ENCODE measurements at regions of chr12 and their contacts with region 1.

Region 1: DNA sequence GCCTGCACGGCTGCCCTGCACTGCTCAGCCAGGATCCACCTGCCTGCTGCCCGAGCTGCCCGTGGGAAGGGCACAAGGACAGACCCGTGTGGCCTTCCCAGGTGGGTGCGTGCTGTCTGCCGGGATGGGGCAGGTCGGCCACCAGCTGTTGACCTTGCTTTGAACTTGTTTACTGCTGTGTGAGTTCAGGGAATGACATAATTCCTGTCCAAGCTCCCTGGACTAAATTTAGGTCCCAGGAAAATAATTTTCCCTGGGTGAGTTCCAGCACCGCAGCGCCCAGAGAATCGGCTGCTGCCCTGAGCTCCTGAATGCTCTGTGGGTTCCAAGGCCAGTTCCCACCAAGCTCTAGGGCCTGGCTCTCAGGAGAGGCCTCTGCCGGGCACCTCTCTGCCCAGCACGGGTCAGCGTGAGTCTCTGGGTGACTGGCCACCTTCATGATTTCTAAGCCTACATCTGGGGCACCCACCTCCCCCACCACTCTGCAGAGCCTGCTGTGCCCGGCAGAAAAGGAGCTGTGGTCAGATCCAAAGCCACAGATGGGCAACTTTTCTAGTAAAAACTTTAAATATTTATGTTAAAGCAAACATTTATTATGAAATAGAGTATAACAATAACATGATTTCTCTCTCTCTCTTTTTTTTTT is 27.2 kb upstream of the MLXIP start:
- DNase-seq: no peak
- H3K4me3 ChIP-seq: no peak overlapping the region
- H3K27ac ChIP-seq: no peak overlapping the region
- H3K4me1 ChIP-seq: no peaks in the 10 kb centered on the region
- H3K27me3 ChIP-seq: no peaks in the 10 kb centered on the region

Region 2: DNA sequence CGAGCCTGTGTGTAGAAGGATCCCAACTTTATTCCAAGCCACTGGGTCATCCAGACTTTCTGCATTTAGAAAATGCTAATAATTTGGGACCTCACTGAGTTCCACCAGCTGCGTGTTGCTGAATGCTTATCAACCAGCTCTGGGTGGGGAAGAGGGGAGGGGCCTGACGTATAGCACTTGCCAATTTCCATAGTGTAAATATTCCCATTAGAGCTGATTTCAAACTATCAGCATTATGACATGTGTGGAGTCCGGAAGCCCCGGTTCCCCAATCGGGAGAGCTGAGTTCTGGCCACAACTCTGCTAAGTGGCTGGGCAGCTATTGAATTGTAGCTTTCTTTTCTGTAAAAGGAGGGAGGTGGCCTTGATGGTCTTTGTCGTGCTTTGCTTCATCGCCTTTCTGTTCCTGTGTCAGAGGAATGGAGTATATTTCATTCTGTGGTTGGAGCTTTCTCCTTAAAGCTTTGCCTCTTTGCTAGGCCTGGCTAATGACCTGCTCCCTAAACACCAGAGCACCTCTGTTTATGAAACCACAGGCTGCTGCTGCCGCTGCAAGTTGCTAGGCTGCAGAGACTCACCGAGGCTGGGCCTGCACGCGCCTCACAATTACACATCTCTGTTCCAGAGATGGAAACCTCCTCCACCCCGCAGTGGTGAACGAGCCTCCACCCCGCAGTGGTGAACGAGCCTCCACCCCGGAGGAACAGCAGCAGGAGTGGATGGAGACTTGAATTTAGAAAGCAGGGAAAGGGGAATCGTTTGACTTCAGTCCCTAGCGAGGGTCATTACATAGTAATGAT is 37.4 kb before region 1 on chr12:
- CTCF ChIA-PET with region 1: no interaction called
- POLR2A ChIA-PET with region 1: no interaction called
- DNase-seq: no peak
- H3K4me3 ChIP-seq: no peak overlapping the region
- H3K27ac ChIP-seq: no peak overlapping the region
- H3K4me1 ChIP-seq: no peaks in the 10 kb centered on the region
- H3K27me3 ChIP-seq: no peaks in the 10 kb centered on the region

Region 3: DNA sequence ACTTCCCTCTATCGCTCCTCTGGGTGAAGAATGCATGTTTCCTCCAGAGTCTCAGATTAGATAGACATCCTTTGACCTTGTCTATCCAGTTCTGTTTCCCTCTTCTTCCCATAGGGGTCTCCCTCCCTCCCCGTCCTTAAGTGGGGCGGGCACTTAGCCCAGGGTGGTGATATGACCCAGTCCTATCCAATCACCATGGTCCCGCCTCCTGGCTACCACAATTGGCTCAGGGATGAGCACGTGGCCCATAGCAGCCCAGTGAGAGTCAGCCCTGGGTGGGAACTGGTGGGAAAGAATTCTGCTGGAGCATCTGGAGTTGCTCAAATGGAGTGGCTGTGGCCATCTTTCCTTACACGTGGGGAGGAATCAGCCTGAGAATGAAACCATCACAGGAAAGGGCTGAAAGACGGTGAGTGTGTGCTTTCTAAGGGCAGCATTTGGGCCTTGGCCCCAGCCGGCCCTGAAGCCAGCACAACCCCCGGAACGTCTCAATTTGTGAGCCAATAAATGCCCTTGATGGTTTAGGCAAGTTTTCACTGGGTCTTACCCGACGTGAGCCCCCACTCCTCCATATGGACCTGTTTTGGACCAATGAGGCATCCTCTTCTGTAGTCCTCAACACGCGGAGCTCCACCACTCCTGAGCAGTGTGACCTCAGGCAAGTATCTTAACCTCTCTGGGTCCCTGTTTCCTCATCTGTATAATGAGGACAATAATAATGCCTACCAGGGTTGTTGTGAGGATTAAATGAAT is 12.8 kb after region 1 on chr12:
- CTCF ChIA-PET with region 1: interaction called, 16 read pairs
- POLR2A ChIA-PET with region 1: interaction called, 3 read pairs
- DNase-seq: peak; percentile 88 to 90 (median 88)
- H3K4me3 ChIP-seq: peak overlapping the region in 2 of 7 experiments; percentile 14 to 33
- H3K27ac ChIP-seq: peak overlapping the region in 1 of 2 experiments; percentile 70
- H3K4me1 ChIP-seq: peaks cover 6 to 37% (median 32%) of the 10 kb centered on the region in 4 experiments
- H3K27me3 ChIP-seq: no peaks in the 10 kb centered on the region

Region 4: GRCh38 chr12:122107261-122107660 is 55.9 kb after region 1 on chr12:
- CTCF ChIA-PET with region 1: interaction called, 19 read pairs
- POLR2A ChIA-PET with region 1: no interaction called
- DNase-seq: no peak
- H3K4me3 ChIP-seq: no peak overlapping the region
- H3K27ac ChIP-seq: no peak overlapping the region
- H3K4me1 ChIP-seq: peaks cover 3 to 52% (median 28%) of the 10 kb centered on the region in 4 experiments
- H3K27me3 ChIP-seq: no peaks in the 10 kb centered on the region

Region 5: DNA sequence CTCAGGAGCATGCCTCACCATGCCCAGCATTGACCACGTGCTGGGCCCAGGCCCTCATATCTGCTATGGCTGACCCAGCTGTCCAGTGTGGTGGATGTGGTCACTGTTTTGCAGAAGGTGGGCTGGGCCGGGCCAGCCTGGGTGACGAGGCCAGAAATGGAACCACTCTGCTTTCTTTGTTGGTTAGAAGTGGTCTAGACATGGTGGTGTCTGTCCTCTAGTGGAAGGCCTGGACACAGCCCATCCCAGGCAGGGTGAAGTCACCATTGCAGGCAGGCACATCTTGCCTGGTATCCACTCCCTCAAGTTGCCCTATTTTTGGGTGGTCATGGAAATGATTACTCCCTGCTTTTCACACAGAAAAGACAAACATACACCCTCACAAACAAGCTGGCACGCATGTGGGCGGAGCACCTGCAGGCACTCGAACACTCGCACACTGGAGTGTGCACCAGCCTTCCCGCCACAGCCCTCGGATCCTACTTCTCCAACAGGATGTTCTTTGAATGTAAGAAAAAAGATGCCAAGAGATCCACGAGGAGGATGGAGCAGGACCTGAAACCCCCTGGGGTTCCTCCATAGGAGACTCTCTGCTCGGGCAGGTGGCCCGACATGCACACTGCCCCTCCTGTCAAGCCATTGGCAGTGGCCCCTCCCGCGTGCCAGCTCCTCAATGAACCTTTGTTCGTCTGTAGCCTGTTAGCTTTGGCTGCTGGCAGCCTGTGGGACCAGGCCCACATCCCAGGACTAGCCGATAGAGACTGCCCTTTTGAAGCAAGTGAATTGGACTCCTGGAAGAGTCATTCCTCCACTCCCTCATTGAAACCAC is 65.6 kb after region 1 on chr12:
- CTCF ChIA-PET with region 1: interaction called, 120 read pairs
- POLR2A ChIA-PET with region 1: no interaction called
- DNase-seq: no peak
- H3K4me3 ChIP-seq: no peak overlapping the region
- H3K27ac ChIP-seq: no peak overlapping the region
- H3K4me1 ChIP-seq: peaks cover 0 to 7% (median 6%) of the 10 kb centered on the region in 4 experiments
- H3K27me3 ChIP-seq: no peaks in the 10 kb centered on the region

Region 6: DNA sequence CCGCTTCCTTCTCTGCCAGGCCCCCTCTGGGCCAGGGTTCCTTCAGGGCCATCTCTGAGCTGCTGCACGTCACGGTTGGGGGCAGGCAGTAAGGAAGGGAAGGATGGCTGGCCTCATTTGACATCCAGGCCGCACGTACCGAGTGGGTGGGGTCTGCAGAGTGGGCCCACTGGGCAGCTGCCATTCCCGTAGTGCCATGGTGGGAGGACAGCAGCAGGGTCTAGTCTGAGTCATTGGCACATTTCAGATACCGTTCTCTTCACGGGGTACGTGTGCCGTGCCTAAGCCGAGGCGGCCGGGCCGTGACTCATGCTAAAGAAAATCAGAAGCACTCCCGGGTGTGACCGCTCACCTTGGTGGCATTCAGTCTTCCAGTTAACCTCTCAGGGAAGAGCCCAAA is 78.8 kb after region 1 on chr12:
- CTCF ChIA-PET with region 1: interaction called, 120 read pairs
- POLR2A ChIA-PET with region 1: no interaction called
- DNase-seq: no peak
- H3K4me3 ChIP-seq: no peak overlapping the region
- H3K27ac ChIP-seq: no peak overlapping the region
- H3K4me1 ChIP-seq: peaks cover 0 to 3% (median 0%) of the 10 kb centered on the region in 4 experiments
- H3K27me3 ChIP-seq: no peaks in the 10 kb centered on the region

Measured in common myeloid progenitor, CD34-positive (primary cell).